Activated naive CD4-positive, alpha-beta T cell treated with anti-CD3 and anti-CD28 coated beads, Interleukin-2, amount 10 ng/mL, durations not matched to agents 7 days and 5 days (primary cell): ENCODE measurements at regions of chr15 and their contacts with region 1.

Region 1: GRCh38 chr15:43776718-43777583 is at the start of gene ELL3:
- DNase-seq: peak; percentile 90
- H3K4me3 Mint-ChIP-seq: peak within 1 kb of the TSS; percentile 91
- H3K27ac Mint-ChIP-seq: peak within 1 kb of the TSS; percentile 92
- H3K4me1 Mint-ChIP-seq: peaks cover 26% of the 10 kb centered on the region
- H3K27me3 Mint-ChIP-seq: peaks cover 9% of the 10 kb centered on the region

Region 2: DNA sequence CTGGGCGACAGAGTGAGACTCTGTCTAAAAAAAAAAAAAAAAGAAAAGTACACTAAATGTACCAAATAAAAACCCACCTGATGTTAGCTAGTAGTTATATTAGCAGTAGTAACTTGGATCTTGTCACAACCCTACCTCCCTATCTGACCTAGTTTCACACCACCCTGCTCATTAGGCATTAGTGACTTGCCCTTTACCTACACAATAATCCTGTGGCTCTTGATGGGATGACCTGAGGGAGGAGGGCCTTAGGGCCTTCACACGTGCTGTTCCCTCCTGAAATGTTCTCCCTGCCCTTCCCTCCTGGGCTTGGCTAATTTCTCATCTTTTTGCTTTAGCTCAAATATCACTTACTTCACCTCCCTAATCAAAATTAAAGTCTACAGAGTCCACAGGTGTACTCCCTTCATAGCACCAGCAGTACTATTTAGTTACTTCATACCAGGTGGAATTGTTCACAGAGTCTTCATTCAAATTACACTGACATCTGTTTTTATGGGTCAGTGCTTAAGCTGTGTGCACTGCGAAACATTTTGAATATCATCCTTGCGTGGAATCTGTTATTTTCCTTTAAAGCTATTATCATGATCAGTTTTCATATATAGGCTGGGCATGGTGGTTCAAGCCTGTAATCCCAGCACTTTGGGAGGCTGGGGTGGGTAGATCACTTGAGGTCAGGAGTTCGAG is 12.3 kb after region 1 on chr15:
- CTCF ChIA-PET with region 1: interaction called, 14 read pairs
- DNase-seq: no peak
- H3K4me3 Mint-ChIP-seq: no peak overlapping the region
- H3K27ac Mint-ChIP-seq: no peak overlapping the region
- H3K4me1 Mint-ChIP-seq: peaks cover 18% of the 10 kb centered on the region
- H3K27me3 Mint-ChIP-seq: no peaks in the 10 kb centered on the region